H1 (cell line): ENCODE measurements at regions of chr9 and their contacts with region 1.

Region 1: GRCh38 chr9:72807765-72808445 is 144.9 kb downstream of the ALDH1A1 start:
- DNase-seq: peak in 1 of 2 experiments; percentile 64
- H3K4me3 ChIP-seq: no peak overlapping the region
- H3K27ac ChIP-seq: no peak overlapping the region
- H3K4me1 ChIP-seq: no peaks in the 10 kb centered on the region
- H3K27me3 ChIP-seq: no peaks in the 10 kb centered on the region
- CTCF ChIP-seq: peak in 2 of 3 experiments; percentile 29 to 59; a peak in 2 of 4 replicates
- EP300 ChIP-seq: no peak
- POLR2A ChIP-seq: no peak
- RAD21 ChIP-seq: peak; percentile 34 to 50; a peak in 3 of 4 replicates

Region 2: GRCh38 chr9:72794947-72795346 is 13.0 kb before region 1 on chr9:
- CTCF ChIA-PET with region 1: interaction called, 19 read pairs
- POLR2A ChIA-PET with region 1: no interaction called
- DNase-seq: no peak
- H3K4me3 ChIP-seq: no peak overlapping the region
- H3K27ac ChIP-seq: no peak overlapping the region
- H3K4me1 ChIP-seq: no peaks in the 10 kb centered on the region
- H3K27me3 ChIP-seq: no peaks in the 10 kb centered on the region
- CTCF ChIP-seq: no peak
- EP300 ChIP-seq: no peak
- POLR2A ChIP-seq: no peak
- RAD21 ChIP-seq: no peak

Region 3: DNA sequence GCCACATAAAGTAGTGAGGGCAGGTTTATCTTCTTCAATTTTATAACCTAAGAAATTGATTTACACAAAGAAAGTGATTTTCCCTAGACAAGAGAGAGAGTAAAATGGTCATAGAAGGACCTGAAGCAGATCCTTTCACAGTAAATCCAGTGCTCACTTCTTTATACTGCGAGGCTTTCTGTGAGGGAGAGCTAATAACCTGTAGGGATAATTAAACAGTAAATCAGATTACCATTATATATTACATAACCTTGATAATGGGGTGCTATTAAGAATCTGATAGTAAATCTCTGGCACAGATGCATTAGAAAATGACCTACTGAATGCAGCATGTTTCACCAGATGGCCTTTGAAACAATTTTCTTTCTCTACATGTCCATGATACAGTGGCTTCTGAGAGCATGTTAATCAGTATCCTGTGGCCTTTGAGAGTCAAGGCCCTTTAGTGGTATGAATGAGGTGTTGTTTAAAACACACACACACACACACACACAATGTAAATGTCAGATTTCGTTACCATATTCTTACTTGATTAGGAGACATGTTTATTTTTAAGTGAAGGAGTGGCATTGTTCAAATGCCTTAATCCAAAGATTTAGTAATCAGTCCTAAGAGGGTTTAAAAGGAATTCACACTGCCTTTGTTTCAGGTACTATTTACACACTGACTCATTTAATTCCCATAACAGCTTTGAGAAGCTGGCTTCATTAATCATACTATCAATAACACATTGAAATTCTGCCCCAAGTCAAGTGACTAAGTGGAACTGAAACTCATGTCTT is 20.2 kb after region 1 on chr9:
- CTCF ChIA-PET with region 1: interaction called, 26 read pairs
- POLR2A ChIA-PET with region 1: no interaction called
- DNase-seq: no peak
- H3K4me3 ChIP-seq: no peak overlapping the region
- H3K27ac ChIP-seq: no peak overlapping the region
- H3K4me1 ChIP-seq: peaks cover 0 to 3% (median 0%) of the 10 kb centered on the region in 4 experiments; a peak in 1 of 7 replicates
- H3K27me3 ChIP-seq: no peaks in the 10 kb centered on the region
- CTCF ChIP-seq: no peak
- EP300 ChIP-seq: no peak
- POLR2A ChIP-seq: no peak
- RAD21 ChIP-seq: no peak

Region 4: GRCh38 chr9:73219985-73220626 is 412.2 kb after region 1 on chr9:
- CTCF ChIA-PET with region 1: no interaction called
- POLR2A ChIA-PET with region 1: no interaction called
- DNase-seq: no peak
- H3K4me3 ChIP-seq: no peak overlapping the region
- H3K27ac ChIP-seq: no peak overlapping the region
- H3K4me1 ChIP-seq: peaks cover 0 to 10% (median 3%) of the 10 kb centered on the region in 4 experiments; a peak in 5 of 7 replicates
- H3K27me3 ChIP-seq: no peaks in the 10 kb centered on the region
- CTCF ChIP-seq: no peak
- EP300 ChIP-seq: no peak
- POLR2A ChIP-seq: no peak
- RAD21 ChIP-seq: no peak